ENCODE measurements at regions of chr1 and their contacts with region 1.

Region 1: DNA sequence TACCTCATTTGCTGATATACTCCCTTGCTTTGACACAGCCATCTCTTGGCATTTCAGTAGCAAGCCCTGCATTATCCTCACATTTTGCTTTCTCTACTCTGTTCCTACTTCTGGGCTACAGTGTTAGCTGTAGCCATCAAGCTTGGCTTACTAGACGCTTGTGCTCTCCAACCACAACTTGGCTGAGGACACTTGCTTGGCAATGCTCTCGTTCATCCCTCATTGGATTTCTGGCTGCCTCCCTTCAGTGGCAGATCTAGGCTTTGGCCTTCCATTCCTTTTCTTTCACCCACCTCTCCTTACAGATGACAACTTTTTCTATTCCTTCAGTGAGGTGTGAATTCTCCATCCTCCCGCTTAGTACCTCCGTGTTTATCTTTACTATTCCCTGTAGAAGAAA is 428.7 kb upstream of the LRRC7 start:
- DNase-seq: no peak
- H3K4me3 ChIP-seq: no peak overlapping the region
- H3K27ac ChIP-seq: no peak overlapping the region
- H3K4me1 ChIP-seq: no peaks in the 10 kb centered on the region
- H3K27me3 ChIP-seq: no peaks in the 10 kb centered on the region
- CTCF ChIP-seq: no peak
- EP300 ChIP-seq: no peak
- POLR2A ChIP-seq: no peak

Region 2: DNA sequence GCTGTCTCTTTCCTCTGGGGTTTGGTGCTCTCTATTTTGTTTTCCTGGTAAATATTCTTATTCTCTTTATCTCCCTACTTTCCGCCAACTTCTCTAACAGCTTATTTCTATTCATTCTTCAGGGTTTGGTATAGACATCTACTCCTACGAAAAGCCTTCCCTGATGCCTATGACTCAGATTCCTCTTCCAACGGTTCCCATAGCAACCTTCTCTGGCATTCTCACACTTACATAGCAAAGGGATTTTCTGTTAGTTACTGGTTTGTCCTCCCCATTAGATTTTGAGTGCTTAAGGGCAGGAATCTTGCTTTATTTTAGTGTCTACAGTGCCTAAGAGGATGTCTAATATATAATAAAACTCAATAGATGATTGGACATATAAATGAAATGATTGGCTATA is 234.5 kb before region 1 on chr1:
- intact Hi-C with region 1: loop called (anchors 5 kb)
- DNase-seq: no peak
- H3K4me3 ChIP-seq: no peak overlapping the region
- H3K27ac ChIP-seq: no peak overlapping the region
- H3K4me1 ChIP-seq: no peaks in the 10 kb centered on the region
- H3K27me3 ChIP-seq: no peaks in the 10 kb centered on the region
- CTCF ChIP-seq: no peak
- EP300 ChIP-seq: no peak
- POLR2A ChIP-seq: no peak

Region 3: GRCh38 chr1:69661686-69662085 is 522.7 kb after region 1 on chr1:
- intact Hi-C with region 1: no loop called
- DNase-seq: no peak
- H3K4me3 ChIP-seq: no peak overlapping the region
- H3K27ac ChIP-seq: no peak overlapping the region
- H3K4me1 ChIP-seq: no peaks in the 10 kb centered on the region
- H3K27me3 ChIP-seq: no peaks in the 10 kb centered on the region
- CTCF ChIP-seq: no peak
- EP300 ChIP-seq: no peak
- POLR2A ChIP-seq: no peak

Measured in esophagus muscularis mucosa (tissue), 4 donors.